H1 (cell line): ENCODE measurements at regions of chr11 and their contacts with region 1.

Region 1: DNA sequence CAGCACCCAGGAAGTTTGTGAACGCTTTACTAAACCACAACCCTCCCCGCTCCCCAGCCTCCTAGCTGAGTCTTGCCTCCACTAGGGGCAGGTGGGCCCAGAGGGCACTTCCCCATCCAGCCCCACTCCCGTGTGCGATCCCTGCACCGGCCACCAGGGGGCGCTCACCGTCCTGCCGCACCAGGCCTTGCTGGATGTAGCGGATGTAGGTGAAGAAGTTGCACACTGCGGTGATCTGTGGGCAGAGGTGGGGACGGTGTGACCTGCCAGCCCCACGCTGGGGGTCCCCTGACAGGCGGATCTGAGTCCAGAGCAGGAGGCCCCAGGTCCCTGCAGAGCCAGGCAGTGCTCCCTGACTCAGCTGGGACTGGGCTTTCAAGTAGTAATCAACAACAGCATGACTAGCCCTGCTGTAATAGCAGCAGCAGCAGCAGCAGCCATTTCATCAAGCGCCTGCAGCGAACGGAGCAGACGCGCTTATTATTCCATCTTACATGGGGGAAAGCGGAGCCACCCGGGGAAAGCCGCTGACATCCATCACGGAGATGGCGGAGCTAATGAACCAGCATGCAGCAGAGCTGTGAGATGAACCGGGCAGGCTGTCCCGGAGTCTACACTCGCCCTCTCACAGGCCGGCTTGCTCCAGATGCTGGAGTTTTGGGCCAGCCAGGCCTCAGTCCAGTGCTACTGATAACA is 7.9 kb upstream of the FADS3 start:
- DNase-seq: peak; percentile 78 to 100
- H3K4me3 ChIP-seq: no peak overlapping the region
- H3K27ac ChIP-seq: no peak overlapping the region
- H3K4me1 ChIP-seq: peaks cover 0 to 18% (median 4%) of the 10 kb centered on the region in 4 experiments; a peak in 6 of 7 replicates
- H3K27me3 ChIP-seq: no peaks in the 10 kb centered on the region
- CTCF ChIP-seq: peak in 2 of 3 experiments; percentile 99 to 100; a peak in 3 of 4 replicates
- EP300 ChIP-seq: no peak
- POLR2A ChIP-seq: no peak
- RAD21 ChIP-seq: peak; percentile 92 to 95

Region 2: DNA sequence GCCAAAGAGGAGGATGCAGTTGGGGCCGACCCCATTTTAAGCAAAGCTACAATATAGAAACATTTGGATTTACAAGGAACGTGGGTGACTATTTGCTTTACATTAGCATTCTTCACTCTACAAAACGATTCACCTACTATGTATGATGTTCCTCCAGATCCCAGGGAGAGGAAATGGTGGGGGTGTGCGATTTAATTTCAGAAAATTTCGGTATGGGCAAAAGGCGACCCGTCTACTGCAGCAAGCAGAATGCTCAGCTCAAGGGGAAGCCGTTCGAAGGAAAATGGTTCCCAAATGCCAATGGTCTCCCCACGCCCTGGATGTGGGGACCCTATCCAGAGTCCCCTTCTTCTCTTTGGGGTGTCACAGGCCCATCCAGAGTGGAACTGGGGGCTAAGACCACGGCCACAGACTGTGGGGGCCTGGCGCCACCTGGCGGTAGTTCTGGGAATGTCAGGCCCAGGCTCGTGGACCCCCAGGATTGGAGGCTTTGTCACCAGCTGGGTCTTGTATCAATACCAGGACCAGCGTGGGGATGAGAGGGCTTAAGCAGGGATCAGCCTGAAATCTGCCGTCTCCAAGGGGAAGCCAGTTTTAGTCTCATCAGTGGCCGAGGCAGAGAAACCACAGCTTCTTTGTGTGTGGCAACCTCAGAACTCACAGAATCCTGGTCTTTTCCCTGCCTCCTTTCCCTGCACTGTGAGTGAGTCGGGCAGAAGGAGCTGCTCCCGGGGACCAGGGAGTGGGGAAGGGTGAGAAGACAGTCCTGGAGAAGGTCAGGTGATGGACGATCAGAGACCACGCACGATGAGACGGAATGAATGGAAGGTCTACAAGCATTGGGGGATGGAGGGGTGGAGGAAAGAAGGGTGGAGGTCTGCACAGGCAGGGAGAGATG is 382.4 kb before region 1 on chr11:
- CTCF ChIA-PET with region 1: no interaction called
- POLR2A ChIA-PET with region 1: no interaction called
- DNase-seq: peak in 1 of 2 experiments; percentile 96
- H3K4me3 ChIP-seq: peak overlapping the region in 1 of 4 experiments; percentile 39; a peak in 1 of 8 replicates
- H3K27ac ChIP-seq: no peak overlapping the region
- H3K4me1 ChIP-seq: peaks cover 0 to 41% (median 27%) of the 10 kb centered on the region in 4 experiments; a peak in 6 of 7 replicates
- H3K27me3 ChIP-seq: no peaks in the 10 kb centered on the region; a peak in 2 of 7 replicates
- CTCF ChIP-seq: peak in 2 of 3 experiments; percentile 98; a peak in 3 of 4 replicates
- EP300 ChIP-seq: no peak
- POLR2A ChIP-seq: no peak
- RAD21 ChIP-seq: peak; percentile 98 to 99

Region 3: DNA sequence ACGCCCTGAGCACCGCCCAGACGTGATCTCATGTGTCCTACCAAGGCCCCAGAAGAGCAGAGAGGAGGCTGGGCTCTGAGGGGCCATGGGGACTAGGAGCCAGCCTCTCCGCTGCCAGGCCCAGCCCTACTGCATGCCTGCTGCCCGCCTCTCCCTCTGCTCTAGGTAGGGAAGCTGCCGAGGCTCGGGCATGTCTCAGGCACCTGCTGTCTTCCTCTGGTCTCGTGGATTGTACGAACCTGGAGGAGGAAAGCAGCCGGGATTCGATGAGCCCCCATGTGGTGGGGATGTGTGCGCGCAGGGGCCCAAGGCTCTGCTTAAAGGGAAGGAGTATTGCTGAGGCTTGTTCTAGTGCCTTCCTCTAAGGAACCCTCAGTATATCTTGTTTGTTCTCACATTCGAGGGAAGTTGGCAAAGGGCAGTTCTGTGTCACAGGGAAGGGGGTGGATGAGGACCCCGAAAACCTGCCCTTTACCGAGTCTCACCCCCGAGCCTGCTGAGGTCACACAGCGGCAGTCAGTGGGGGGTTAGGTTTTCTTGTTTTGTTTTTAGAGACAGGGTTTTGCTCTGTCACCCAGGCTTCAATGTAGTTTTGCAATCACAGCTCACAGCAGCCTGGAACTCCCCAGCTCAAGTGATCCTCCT is 197.9 kb before region 1 on chr11:
- CTCF ChIA-PET with region 1: no interaction called
- POLR2A ChIA-PET with region 1: no interaction called
- DNase-seq: peak in 1 of 2 experiments; percentile 76
- H3K4me3 ChIP-seq: no peak overlapping the region; a peak in 1 of 8 replicates
- H3K27ac ChIP-seq: no peak overlapping the region
- H3K4me1 ChIP-seq: peaks cover 0 to 13% (median 2%) of the 10 kb centered on the region in 4 experiments; a peak in 4 of 7 replicates
- H3K27me3 ChIP-seq: no peaks in the 10 kb centered on the region; a peak in 1 of 7 replicates
- CTCF ChIP-seq: peak in 2 of 3 experiments; percentile 49 to 65; a peak in 3 of 4 replicates
- EP300 ChIP-seq: no peak
- POLR2A ChIP-seq: no peak
- RAD21 ChIP-seq: peak; percentile 40 to 56; a peak in 3 of 4 replicates

Region 4: DNA sequence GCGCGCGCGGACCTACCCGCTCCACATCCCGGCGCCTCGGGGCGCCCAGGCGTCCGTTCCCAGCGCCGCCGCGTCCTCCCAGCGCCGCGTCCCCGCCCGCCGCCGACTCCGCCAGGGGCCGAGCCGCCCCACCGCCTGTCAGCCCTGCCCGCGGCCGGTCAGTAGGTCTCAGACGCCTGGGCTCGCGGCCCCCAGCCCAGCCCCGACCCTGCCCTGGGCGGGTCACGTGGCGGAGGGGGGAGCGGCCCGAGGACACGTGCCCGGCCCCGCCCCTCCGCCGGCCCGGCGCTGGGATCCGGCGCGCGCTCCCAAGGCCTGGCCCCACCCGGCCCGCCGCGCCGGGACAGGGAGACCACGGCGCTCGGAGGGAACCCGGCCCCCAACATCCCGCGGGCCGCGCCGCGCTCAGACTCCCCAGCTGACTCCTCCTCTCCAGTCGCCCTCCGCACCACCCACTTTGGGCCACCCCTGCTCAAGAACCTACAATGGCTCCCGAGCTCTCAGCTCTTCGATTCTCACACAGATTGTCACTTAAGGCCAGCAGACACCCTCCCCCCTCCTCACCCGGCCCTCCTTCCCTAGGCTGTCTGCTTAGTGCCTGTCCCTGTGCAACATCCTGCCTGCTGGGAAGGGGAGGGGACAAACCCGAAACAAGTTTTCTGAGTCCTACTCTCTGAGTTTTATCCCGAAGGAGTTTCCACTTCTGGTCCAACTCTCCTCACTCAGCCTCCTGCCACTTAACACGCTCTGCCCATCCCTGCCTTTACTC is 18.2 kb after region 1 on chr11 and contains the start of gene RAB3IL1:
- CTCF ChIA-PET with region 1: interaction called, 225 read pairs
- POLR2A ChIA-PET with region 1: interaction called, 9 read pairs
- DNase-seq: peak in 1 of 2 experiments; percentile 81
- H3K4me3 ChIP-seq: peak within 1 kb of the TSS; percentile 32 to 66 (median 44)
- H3K27ac ChIP-seq: no peak within 1 kb of the TSS
- H3K4me1 ChIP-seq: peaks cover 0 to 13% (median 2%) of the 10 kb centered on the region in 4 experiments; a peak in 3 of 7 replicates
- H3K27me3 ChIP-seq: peaks cover 0 to 28% (median 20%) of the 10 kb centered on the region in 4 experiments; a peak in 6 of 7 replicates
- CTCF ChIP-seq: no peak
- EP300 ChIP-seq: no peak
- POLR2A ChIP-seq: no peak
- RAD21 ChIP-seq: no peak
- total RNA-seq, gene RAB3IL1: 5.7 and 6.8 TPM in 2 replicates

Region 5: GRCh38 chr11:61940466-61940865 is 41.2 kb after region 1 on chr11:
- CTCF ChIA-PET with region 1: interaction called, 658 read pairs
- POLR2A ChIA-PET with region 1: interaction called, 137 read pairs
- DNase-seq: no peak
- H3K4me3 ChIP-seq: no peak overlapping the region
- H3K27ac ChIP-seq: no peak overlapping the region
- H3K4me1 ChIP-seq: no peaks in the 10 kb centered on the region
- H3K27me3 ChIP-seq: no peaks in the 10 kb centered on the region
- CTCF ChIP-seq: no peak
- EP300 ChIP-seq: no peak
- POLR2A ChIP-seq: no peak
- RAD21 ChIP-seq: no peak

Region 6: GRCh38 chr11:61967116-61967923 is 68.0 kb after region 1 on chr11 and contains the start of gene FTH1:
- CTCF ChIA-PET with region 1: interaction called, 36 read pairs
- POLR2A ChIA-PET with region 1: interaction called, 9 read pairs
- DNase-seq: peak; percentile 56 to 90
- H3K4me3 ChIP-seq: peak within 1 kb of the TSS; percentile 89 to 97 (median 96)
- H3K27ac ChIP-seq: peak within 1 kb of the TSS; percentile 96
- H3K4me1 ChIP-seq: peaks cover 9 to 20% (median 13%) of the 10 kb centered on the region in 4 experiments
- H3K27me3 ChIP-seq: no peaks in the 10 kb centered on the region
- CTCF ChIP-seq: no peak
- EP300 ChIP-seq: peak in 1 of 2 experiments; percentile 57; a peak in 2 of 3 replicates
- POLR2A ChIP-seq: peak; percentile 90 to 96
- RAD21 ChIP-seq: no peak
- total RNA-seq, gene FTH1: 1,461 and 1,535 TPM in 2 replicates

Region 7: DNA sequence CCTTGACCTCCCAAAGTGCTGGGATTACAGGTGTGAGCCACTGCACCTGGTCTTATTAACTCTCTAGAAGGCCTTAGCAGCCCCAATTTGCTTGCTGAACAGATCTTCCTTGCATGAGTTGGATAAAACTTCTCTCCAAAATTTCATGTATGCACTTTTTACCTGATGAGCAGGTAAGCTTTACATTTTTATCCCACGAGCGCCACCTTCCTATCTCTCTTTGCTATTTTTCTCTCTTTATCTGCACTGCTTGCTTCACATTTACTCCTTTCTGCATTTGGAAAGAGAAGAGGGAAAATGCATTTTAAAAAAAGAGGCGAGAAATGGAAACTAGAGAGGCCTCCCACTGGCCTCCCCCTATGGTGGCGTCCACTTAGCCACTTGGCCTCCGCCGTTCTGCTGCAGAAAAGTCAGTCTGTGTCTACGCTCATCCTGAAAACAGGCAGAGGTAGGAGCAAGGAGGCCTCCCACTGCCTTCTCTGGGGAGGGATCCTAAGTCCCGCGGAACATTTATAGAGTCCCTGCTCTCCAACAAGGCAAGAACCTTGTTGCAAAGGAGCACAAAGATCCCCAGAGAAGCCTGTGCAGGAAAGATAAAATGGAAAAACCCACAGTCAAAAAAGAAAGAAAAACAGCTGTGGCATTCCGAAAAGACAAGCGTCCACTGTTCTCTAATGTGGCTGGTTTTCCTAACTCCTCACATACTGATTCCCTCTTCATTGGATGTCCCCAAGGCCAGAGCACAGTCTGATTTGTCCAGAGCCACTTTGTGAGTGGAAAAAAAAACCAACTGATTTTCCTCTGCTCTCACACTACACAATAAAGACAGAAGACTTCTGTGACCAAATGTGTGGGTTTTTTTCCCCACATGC is 162.3 kb after region 1 on chr11:
- CTCF ChIA-PET with region 1: interaction called, 71 read pairs
- POLR2A ChIA-PET with region 1: no interaction called
- DNase-seq: no peak
- H3K4me3 ChIP-seq: no peak overlapping the region
- H3K27ac ChIP-seq: no peak overlapping the region
- H3K4me1 ChIP-seq: no peaks in the 10 kb centered on the region
- H3K27me3 ChIP-seq: no peaks in the 10 kb centered on the region
- CTCF ChIP-seq: peak in 1 of 3 experiments; percentile 28; a peak in 1 of 4 replicates
- EP300 ChIP-seq: no peak
- POLR2A ChIP-seq: no peak
- RAD21 ChIP-seq: peak; percentile 48 to 58